ENCODE measurements at regions of chr6 and their contacts with region 1.

Region 1: DNA sequence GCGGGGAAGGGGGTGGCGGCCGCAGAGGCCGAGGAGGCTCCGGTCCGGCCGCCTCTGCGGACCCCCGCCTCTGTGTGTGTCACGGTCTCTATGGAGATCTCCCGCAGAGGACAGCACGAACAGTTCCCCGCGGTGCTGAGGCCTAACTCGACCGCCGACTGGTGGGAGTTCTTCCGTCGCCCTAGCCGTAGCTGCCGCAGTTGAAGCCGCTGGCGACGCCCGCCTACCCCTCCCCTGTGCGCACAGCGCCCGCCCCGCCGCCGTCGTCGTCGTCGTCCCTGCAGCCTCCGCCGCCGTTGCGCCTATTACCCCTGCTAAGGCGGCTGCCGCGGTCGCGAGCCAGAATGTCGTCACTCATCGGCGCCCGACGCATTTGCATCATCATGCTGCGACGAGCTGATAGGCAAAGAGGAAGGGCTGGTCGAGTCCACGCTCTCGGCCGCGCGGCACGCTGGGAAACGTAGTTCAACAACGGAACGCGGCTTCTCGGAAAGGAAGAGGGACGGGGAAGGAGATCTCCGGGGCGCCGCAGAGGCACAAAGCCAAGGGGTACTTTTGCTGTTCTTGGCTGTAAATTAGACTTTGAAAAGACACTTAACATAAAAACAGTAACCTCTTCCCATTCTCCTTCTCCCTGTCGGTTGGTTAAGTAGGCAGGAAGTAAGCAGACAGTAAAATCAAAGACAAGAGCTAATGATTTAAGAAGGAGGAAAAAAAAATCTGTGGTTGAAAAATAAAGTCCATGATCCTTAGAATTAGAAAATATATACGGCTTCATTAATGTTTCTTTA is at the start of gene NUP153:
- DNase-seq: peak; percentile 99
- ATAC-seq: peak; percentile 70
- H3K4me3 Mint-ChIP-seq: peak within 1 kb of the TSS; percentile 86
- H3K27ac Mint-ChIP-seq: peak within 1 kb of the TSS; percentile 99
- H3K4me1 Mint-ChIP-seq: peaks cover 27% of the 10 kb centered on the region
- H3K27me3 Mint-ChIP-seq: no peaks in the 10 kb centered on the region
- total RNA-seq, gene NUP153: 81.0 to 99.8 TPM

Region 2: DNA sequence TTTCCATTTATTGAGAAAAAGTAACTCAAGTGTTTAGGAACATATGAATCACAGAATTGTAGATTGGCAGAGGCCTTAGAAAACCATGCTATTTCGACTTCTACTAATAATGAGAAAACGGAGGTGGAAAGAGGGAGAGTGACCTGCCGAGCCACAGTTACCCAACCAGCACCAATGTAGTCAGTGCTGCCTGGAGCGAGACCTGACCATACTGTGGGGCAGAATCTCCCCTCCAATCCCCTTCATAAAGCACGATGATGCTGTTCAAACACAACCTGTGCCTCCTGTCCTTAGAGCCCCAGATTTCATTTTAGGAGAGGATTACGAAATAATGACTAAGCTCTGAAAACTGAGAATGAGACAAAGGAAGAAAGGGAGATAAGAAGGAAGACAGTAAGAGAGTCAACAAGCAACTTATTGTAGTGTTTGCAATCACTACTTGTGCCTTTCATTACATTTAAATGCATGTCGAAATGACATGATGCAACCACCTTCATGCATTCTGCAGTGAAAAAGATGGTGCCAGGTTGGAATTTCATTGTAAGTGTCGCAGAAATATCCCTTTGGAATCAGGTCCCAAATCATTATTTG is 1016.1 kb before region 1 on chr6:
- CTCF ChIA-PET with region 1: no interaction called
- POLR2A ChIA-PET with region 1: no interaction called
- intact Hi-C with region 1: loop called in 1 of 2 experiments (anchors 10 kb)
- DNase-seq: peak; percentile 73
- ATAC-seq: peak; percentile 75
- H3K4me3 Mint-ChIP-seq: peak overlapping the region; percentile 34
- H3K27ac Mint-ChIP-seq: peak overlapping the region; percentile 88
- H3K4me1 Mint-ChIP-seq: peaks cover 88% of the 10 kb centered on the region
- H3K27me3 Mint-ChIP-seq: no peaks in the 10 kb centered on the region

Region 3: GRCh38 chr6:17599885-17600526 is 106.8 kb before region 1 on chr6 and contains the start of gene FAM8A1:
- CTCF ChIA-PET with region 1: interaction called, 4 read pairs
- POLR2A ChIA-PET with region 1: interaction called, 5 read pairs
- intact Hi-C with region 1: loop called (anchors 1 kb)
- DNase-seq: peak; percentile 98
- ATAC-seq: peak; percentile 83
- H3K4me3 Mint-ChIP-seq: peak within 1 kb of the TSS; percentile 75
- H3K27ac Mint-ChIP-seq: peak within 1 kb of the TSS; percentile 66
- H3K4me1 Mint-ChIP-seq: peaks cover 41% of the 10 kb centered on the region
- H3K27me3 Mint-ChIP-seq: no peaks in the 10 kb centered on the region
- total RNA-seq, gene FAM8A1: 3.3 to 4.1 TPM

Region 4: DNA sequence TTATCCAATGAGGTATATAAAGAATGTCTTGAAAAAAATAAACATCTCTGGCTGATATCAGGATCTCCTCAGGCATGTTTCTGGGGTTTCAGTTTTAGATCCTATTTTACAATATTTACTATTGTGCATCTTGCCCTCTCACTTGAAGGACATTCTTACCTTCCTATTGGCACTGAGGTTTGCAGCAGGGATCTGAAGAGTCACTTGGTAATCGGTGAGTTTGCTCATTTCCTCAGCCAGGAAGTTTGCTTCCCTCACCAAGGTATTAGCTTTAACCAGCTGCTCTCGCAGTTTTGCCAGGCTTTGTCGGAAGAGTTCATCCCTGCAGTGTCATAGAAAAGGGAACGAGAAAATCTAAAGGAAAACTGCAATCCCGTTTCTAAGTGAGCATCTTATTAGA is 101.8 kb after region 1 on chr6:
- CTCF ChIA-PET with region 1: interaction called, 16 read pairs
- POLR2A ChIA-PET with region 1: no interaction called
- intact Hi-C with region 1: loop called in 1 of 2 experiments (anchors 1 kb)
- DNase-seq: no peak
- ATAC-seq: no peak
- H3K4me3 Mint-ChIP-seq: no peak overlapping the region
- H3K27ac Mint-ChIP-seq: no peak overlapping the region
- H3K4me1 Mint-ChIP-seq: no peaks in the 10 kb centered on the region
- H3K27me3 Mint-ChIP-seq: peaks cover 9% of the 10 kb centered on the region

Region 5: GRCh38 chr6:18155150-18155863 is 448.5 kb after region 1 on chr6 and contains the start of gene KDM1B:
- CTCF ChIA-PET with region 1: no interaction called
- POLR2A ChIA-PET with region 1: interaction called, 4 read pairs
- intact Hi-C with region 1: loop called (anchors 1 to 5 kb)
- DNase-seq: peak; percentile 99
- ATAC-seq: peak; percentile 97
- H3K4me3 Mint-ChIP-seq: peak within 1 kb of the TSS; percentile 93
- H3K27ac Mint-ChIP-seq: peak within 1 kb of the TSS; percentile 90
- H3K4me1 Mint-ChIP-seq: peaks cover 27% of the 10 kb centered on the region
- H3K27me3 Mint-ChIP-seq: no peaks in the 10 kb centered on the region
- total RNA-seq, gene KDM1B: 13.4 to 13.9 TPM

Region 6: DNA sequence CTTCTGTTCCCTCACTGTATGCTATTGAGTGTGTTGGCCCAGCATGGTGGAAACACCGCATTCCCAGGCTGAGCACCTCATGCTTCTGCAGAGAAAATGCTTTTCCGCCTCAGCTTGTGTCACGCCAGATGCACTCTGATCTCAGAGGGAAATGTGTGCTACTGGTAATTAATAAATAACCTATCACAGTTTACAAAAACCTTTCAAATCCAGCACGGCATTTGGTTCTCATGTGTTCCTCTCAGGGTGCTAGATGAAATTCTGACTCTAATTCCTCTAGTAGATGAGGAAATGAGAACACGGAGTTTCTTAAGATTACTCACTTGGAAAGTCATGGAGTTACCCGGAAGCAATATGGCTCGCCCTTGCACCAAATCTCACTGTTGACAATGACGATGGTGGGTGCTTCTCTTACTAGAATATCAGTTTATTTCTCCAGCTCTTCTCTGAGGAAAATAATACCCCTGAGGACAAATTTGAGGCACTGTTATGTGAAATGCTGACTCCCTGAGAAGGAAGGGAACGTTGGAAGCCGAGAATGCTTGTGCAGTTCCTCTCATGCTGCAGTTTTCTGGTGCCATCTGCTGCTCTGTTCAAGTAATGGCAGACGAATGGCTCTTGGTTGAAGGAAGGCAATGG is 796.9 kb after region 1 on chr6:
- CTCF ChIA-PET with region 1: no interaction called
- POLR2A ChIA-PET with region 1: interaction called, 4 read pairs
- intact Hi-C with region 1: loop called in 1 of 2 experiments (anchors 10 kb)
- DNase-seq: peak; percentile 55
- ATAC-seq: peak; percentile 68
- H3K4me3 Mint-ChIP-seq: no peak overlapping the region
- H3K27ac Mint-ChIP-seq: no peak overlapping the region
- H3K4me1 Mint-ChIP-seq: peaks cover 6% of the 10 kb centered on the region
- H3K27me3 Mint-ChIP-seq: peaks cover 7% of the 10 kb centered on the region